Mammary epithelial cell (primary cell): ENCODE measurements at regions of chr21 and their contacts with region 1.

Region 1: DNA sequence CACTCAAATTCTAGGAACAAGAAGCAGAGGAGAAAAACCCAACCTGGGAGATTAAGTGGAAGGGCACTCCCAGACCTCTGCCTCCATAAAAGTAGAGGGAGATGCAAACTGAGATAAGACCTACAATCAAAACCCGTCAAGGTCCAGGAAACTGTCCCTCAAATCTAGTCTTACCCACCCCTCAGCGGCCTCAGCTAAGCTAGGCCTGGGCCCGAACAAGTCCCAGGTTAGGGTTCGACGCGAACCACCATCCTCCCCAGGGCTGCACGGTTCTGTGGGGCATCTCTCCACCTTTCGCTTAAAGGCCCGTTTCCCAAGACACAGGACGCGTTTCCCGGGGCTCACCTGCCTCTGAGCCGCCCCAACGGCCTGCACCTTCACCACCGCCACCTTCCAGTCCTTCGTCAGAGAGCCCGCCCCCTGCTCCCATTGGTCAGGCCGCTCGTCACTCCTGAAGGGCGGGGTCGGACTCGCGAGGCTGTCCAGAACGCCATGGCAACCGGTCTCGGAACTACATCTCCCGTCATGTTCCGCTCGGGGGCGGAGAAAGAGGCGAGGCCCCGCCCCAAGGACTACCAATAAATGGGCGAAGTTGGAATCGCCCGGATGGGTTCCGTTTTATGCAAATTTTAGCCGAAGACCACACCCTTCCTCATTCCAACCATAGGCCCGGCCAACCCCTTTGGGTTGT is at the start of gene CRYZL1:
- DNase-seq: peak; percentile 100
- H3K4me3 ChIP-seq: peak within 1 kb of the TSS; percentile 82 to 88 (median 83)
- H3K27ac ChIP-seq: peak within 1 kb of the TSS; percentile 91
- H3K4me1 ChIP-seq: peaks cover 8% of the 10 kb centered on the region
- H3K27me3 ChIP-seq: no peaks in the 10 kb centered on the region
- CTCF ChIP-seq: no peak
- total RNA-seq, gene CRYZL1: 21.0 to 21.4 TPM

Region 2: GRCh38 chr21:33655591-33656221 is 14.2 kb after region 1 on chr21:
- CTCF ChIA-PET with region 1: no interaction called
- dilution Hi-C with region 1: no loop called
- in situ Hi-C with region 1: no loop called
- intact Hi-C with region 1: loop called (anchors 1 kb)
- DNase-seq: peak; percentile 89
- H3K4me3 ChIP-seq: peak overlapping the region in 1 of 3 experiments; percentile 18
- H3K27ac ChIP-seq: peak overlapping the region; percentile 75
- H3K4me1 ChIP-seq: peaks cover 22% of the 10 kb centered on the region
- H3K27me3 ChIP-seq: no peaks in the 10 kb centered on the region
- CTCF ChIP-seq: no peak

Region 3: GRCh38 chr21:33682992-33683627 is 41.6 kb after region 1 on chr21:
- CTCF ChIA-PET with region 1: no interaction called
- dilution Hi-C with region 1: no loop called
- in situ Hi-C with region 1: no loop called
- intact Hi-C with region 1: loop called (anchors 1 kb)
- DNase-seq: peak; percentile 93
- H3K4me3 ChIP-seq: peak overlapping the region in 1 of 3 experiments; percentile 9
- H3K27ac ChIP-seq: peak overlapping the region; percentile 77
- H3K4me1 ChIP-seq: peaks cover 44% of the 10 kb centered on the region
- H3K27me3 ChIP-seq: no peaks in the 10 kb centered on the region
- CTCF ChIP-seq: no peak

Region 4: DNA sequence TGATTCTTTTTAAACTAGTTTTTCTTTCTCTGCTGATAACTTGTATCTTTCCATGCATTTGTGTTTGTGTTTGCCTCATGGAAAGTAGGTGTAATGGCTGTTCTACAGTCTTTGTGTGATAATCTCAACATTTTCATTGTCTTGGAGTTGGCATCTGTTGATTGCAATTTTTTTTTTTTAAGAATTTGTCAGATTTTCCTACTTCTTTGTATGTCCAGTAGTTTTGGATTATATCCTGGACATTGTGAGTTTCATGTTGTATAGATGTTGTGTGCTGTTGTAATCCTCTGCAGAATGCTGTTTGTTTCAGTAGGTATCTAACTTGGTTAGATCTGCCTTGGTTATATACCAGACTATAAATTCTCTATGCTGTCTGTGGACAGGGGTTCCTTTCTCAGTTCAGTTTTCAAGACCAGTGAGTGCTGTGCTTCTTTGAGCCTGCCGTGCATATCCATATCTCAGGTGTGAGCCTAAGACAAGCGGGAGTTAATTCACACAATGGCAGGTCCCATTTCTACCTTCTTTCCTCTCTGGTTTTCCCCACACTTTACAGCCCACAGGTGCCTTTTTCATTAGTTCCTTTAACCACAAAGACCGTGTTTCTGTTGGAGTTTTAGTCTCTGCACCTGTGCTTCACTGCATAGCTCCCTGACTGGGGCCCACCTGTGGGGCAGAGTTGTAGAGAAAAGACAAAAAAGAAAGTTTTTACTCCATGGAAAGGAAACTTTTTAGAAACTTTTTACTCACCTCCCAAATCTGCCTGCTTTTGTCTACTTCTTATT is 70.7 kb after region 1 on chr21:
- CTCF ChIA-PET with region 1: no interaction called
- dilution Hi-C with region 1: no loop called
- in situ Hi-C with region 1: no loop called
- intact Hi-C with region 1: loop called (anchors 5 kb)
- DNase-seq: no peak
- H3K4me3 ChIP-seq: no peak overlapping the region
- H3K27ac ChIP-seq: no peak overlapping the region
- H3K4me1 ChIP-seq: peaks cover 6% of the 10 kb centered on the region
- H3K27me3 ChIP-seq: no peaks in the 10 kb centered on the region
- CTCF ChIP-seq: no peak

Region 5: GRCh38 chr21:33761441-33762036 is 120.1 kb after region 1 on chr21:
- CTCF ChIA-PET with region 1: no interaction called
- dilution Hi-C with region 1: no loop called
- in situ Hi-C with region 1: no loop called
- intact Hi-C with region 1: loop called (anchors 1 kb)
- DNase-seq: peak; percentile 81
- H3K4me3 ChIP-seq: no peak overlapping the region
- H3K27ac ChIP-seq: peak overlapping the region; percentile 13
- H3K4me1 ChIP-seq: peaks cover 10% of the 10 kb centered on the region
- H3K27me3 ChIP-seq: no peaks in the 10 kb centered on the region
- CTCF ChIP-seq: no peak

Region 6: GRCh38 chr21:33801424-33802420 is 160.2 kb after region 1 on chr21:
- CTCF ChIA-PET with region 1: no interaction called
- dilution Hi-C with region 1: no loop called
- in situ Hi-C with region 1: no loop called
- intact Hi-C with region 1: loop called (anchors 1 kb)
- DNase-seq: peak; percentile 96
- H3K4me3 ChIP-seq: no peak overlapping the region
- H3K27ac ChIP-seq: peak overlapping the region; percentile 68
- H3K4me1 ChIP-seq: peaks cover 23% of the 10 kb centered on the region
- H3K27me3 ChIP-seq: no peaks in the 10 kb centered on the region
- CTCF ChIP-seq: no peak

Region 7: DNA sequence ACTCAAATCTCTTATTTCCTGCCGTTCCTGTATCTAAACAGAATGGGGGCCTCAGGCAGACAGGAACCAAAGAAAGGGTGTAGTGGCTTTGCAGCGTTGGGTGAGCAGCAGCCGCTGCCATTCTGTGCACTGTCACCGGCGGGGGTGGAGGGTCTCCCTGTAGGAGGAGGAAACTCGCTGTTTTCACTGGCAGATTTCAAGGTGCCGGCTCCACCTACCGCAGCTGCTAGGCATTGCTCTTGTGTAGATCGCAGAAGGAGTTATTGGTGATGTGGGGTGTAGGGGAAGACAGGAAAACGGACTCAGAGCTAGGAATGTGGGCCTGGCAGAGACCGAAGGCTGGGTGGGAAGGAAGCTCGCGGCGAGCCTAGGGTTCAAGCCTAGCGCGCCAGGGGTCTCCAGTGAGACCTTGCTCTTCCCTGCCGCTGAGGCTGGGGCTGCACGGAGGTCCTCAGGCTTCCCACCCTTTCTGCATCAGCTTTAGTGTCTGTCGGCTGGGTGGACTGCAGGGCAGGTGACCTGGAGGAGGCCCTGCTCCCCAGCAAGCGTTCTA is 253.3 kb after region 1 on chr21:
- CTCF ChIA-PET with region 1: no interaction called
- dilution Hi-C with region 1: no loop called
- in situ Hi-C with region 1: loop called in 1 of 2 experiments (anchors 25 kb)
- intact Hi-C with region 1: loop called (anchors 1 kb)
- DNase-seq: peak; percentile 63
- H3K4me3 ChIP-seq: peak overlapping the region in 1 of 3 experiments; percentile 8
- H3K27ac ChIP-seq: no peak overlapping the region
- H3K4me1 ChIP-seq: peaks cover 6% of the 10 kb centered on the region
- H3K27me3 ChIP-seq: no peaks in the 10 kb centered on the region
- CTCF ChIP-seq: peak; percentile 72 to 91